Endothelial cell of umbilical vein (primary cell): ENCODE measurements at regions of chr10 and their contacts with region 1.

Region 1: GRCh38 chr10:91409869-91410637 is at the start of gene HECTD2:
- DNase-seq: peak; percentile 72
- H3K4me3 ChIP-seq: peak within 1 kb of the TSS; percentile 54 to 86 (median 80)
- H3K27ac ChIP-seq: peak within 1 kb of the TSS; percentile 96
- H3K4me1 ChIP-seq: peaks cover 9% of the 10 kb centered on the region
- H3K27me3 ChIP-seq: no peaks in the 10 kb centered on the region
- CTCF ChIP-seq: peak; percentile 10 to 21
- POLR2A ChIP-seq: no peak
- total RNA-seq, gene HECTD2: 7.7 and 10.7 TPM in 2 replicates

Region 2: DNA sequence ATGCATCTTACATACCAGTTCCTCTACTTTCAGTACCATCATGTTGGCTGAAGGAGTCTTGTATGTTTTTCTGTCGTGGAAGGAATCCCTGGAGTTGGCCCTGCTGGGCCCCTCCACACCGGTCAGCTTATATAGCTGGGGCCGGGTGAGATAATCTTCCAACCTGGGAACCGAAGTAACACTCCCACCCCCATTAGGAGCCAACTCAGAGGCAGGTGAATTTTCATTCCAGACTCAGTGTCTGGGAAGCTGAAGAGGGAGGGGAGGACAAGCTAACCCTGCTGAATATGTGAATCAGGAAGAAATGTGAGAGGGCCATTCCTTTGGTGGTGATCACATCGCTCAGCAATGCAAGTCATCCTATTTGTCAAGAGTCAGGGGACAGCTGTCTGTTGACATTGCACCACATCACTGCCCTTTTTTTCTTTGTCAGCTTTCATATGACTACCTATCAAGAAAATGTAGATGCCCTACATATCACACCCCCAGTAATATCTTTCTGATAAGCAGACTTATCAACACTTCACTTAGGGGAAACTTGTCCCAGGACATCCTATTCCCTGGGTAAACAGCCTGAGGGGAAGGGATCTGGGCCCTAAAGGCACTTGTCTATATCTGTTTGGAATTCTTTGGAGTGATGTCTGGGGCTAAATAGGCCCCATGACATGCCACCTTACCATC is 488.9 kb before region 1 on chr10 and contains the start of gene ANKRD1:
- CTCF ChIA-PET with region 1: no interaction called
- POLR2A ChIA-PET with region 1: no interaction called
- dilution Hi-C with region 1: no loop called
- intact Hi-C with region 1: loop called (anchors 1 kb)
- DNase-seq: peak; percentile 97
- H3K4me3 ChIP-seq: peak within 1 kb of the TSS; percentile 52 to 98 (median 56)
- H3K27ac ChIP-seq: peak within 1 kb of the TSS; percentile 82
- H3K4me1 ChIP-seq: peaks cover 28% of the 10 kb centered on the region
- H3K27me3 ChIP-seq: no peaks in the 10 kb centered on the region
- CTCF ChIP-seq: no peak
- POLR2A ChIP-seq: peak; percentile 94
- total RNA-seq, gene ANKRD1: 591 and 664 TPM in 2 replicates

Region 3: GRCh38 chr10:91354166-91355075 is 55.6 kb before region 1 on chr10:
- CTCF ChIA-PET with region 1: no interaction called
- POLR2A ChIA-PET with region 1: no interaction called
- dilution Hi-C with region 1: no loop called
- intact Hi-C with region 1: no loop called
- DNase-seq: no peak
- H3K4me3 ChIP-seq: no peak overlapping the region
- H3K27ac ChIP-seq: no peak overlapping the region
- H3K4me1 ChIP-seq: peaks cover 8% of the 10 kb centered on the region
- H3K27me3 ChIP-seq: peaks cover 8 to 16% of the 10 kb centered on the region in 2 experiments
- CTCF ChIP-seq: no peak
- POLR2A ChIP-seq: no peak

Region 4: GRCh38 chr10:91389636-91390512 is 20.2 kb before region 1 on chr10:
- CTCF ChIA-PET with region 1: interaction called, 3 read pairs
- POLR2A ChIA-PET with region 1: no interaction called
- dilution Hi-C with region 1: no loop called
- intact Hi-C with region 1: loop called (anchors 1 kb)
- DNase-seq: peak; percentile 64
- H3K4me3 ChIP-seq: peak overlapping the region in 1 of 3 experiments; percentile 27
- H3K27ac ChIP-seq: no peak overlapping the region
- H3K4me1 ChIP-seq: peaks cover 5% of the 10 kb centered on the region
- H3K27me3 ChIP-seq: peaks cover 14 to 31% of the 10 kb centered on the region in 2 experiments
- CTCF ChIP-seq: peak; percentile 27 to 28
- POLR2A ChIP-seq: no peak

Region 5: DNA sequence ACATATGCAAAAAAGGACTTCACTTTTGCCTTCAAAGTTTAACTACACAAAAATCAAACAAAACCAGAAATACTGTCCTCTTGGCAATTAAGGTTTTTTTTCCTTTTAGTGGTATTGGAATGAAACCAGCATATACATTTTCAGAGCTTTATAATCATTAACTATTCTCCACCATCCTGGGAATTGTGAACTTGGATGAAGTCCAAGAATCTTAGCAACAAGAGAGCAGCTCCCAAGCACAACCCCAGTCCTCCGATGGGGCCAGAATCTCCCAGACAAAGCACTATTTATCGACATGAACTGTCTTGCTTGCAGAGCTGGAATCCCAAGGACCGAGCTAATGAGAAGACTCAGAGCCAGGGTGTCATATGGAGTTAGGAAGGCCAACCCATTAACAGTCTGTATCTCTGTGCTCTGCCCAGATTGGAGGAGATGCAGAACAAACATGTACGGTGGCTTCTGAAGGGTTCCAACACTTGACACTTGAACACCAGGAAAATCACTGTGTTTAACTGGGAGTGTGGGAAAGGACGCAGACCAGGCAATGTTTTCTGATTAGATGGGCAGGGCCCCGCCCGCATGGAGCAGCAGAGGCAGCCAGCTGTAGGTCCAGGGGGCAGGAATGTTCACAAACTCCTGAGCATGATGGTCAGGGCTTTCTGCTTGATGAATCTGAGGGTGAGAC is 187.3 kb after region 1 on chr10:
- CTCF ChIA-PET with region 1: no interaction called
- POLR2A ChIA-PET with region 1: no interaction called
- dilution Hi-C with region 1: no loop called
- intact Hi-C with region 1: loop called (anchors 2 kb)
- DNase-seq: no peak
- H3K4me3 ChIP-seq: peak overlapping the region in 1 of 3 experiments; percentile 8
- H3K27ac ChIP-seq: peak overlapping the region; percentile 74
- H3K4me1 ChIP-seq: peaks cover 28% of the 10 kb centered on the region
- H3K27me3 ChIP-seq: no peaks in the 10 kb centered on the region
- CTCF ChIP-seq: no peak
- POLR2A ChIP-seq: no peak